H1 (cell line): ENCODE measurements at regions of chr5 and their contacts with region 1.

Region 1: DNA sequence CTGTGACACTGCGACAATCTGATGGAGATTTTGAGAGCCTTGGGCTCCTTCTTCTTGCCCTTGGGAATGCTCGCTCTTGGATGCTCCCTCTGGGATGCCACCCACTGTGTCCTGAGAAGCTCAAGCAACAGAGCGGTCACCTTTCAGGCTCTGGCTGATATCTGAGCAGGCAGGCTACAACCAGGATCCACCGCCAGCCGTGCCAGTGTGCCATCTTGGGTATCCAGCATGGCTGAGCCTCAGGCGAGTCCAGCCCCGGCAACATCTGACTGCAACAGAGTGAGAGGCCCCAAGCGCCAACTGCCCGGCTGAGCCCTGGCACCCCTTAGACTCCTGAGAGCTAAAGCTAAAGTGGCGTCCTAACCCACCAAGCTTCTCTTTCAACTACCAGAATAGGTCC is 202.1 kb downstream of the IRX2 start:
- DNase-seq: no peak
- H3K4me3 ChIP-seq: no peak overlapping the region
- H3K27ac ChIP-seq: no peak overlapping the region
- H3K4me1 ChIP-seq: no peaks in the 10 kb centered on the region
- H3K27me3 ChIP-seq: no peaks in the 10 kb centered on the region
- CTCF ChIP-seq: no peak
- EP300 ChIP-seq: no peak
- POLR2A ChIP-seq: no peak
- RAD21 ChIP-seq: no peak

Region 2: GRCh38 chr5:2303431-2304100 is 245.8 kb before region 1 on chr5:
- CTCF ChIA-PET with region 1: no interaction called
- POLR2A ChIA-PET with region 1: no interaction called
- DNase-seq: no peak
- H3K4me3 ChIP-seq: no peak overlapping the region
- H3K27ac ChIP-seq: no peak overlapping the region
- H3K4me1 ChIP-seq: peaks cover 0 to 7% (median under 1%) of the 10 kb centered on the region in 4 experiments; a peak in 3 of 7 replicates
- H3K27me3 ChIP-seq: no peaks in the 10 kb centered on the region
- CTCF ChIP-seq: no peak
- EP300 ChIP-seq: no peak
- POLR2A ChIP-seq: no peak
- RAD21 ChIP-seq: no peak

Region 3: GRCh38 chr5:2563046-2563445 is 13.7 kb after region 1 on chr5:
- CTCF ChIA-PET with region 1: interaction called, 12 read pairs
- POLR2A ChIA-PET with region 1: no interaction called
- DNase-seq: no peak
- H3K4me3 ChIP-seq: no peak overlapping the region
- H3K27ac ChIP-seq: no peak overlapping the region
- H3K4me1 ChIP-seq: no peaks in the 10 kb centered on the region
- H3K27me3 ChIP-seq: no peaks in the 10 kb centered on the region
- CTCF ChIP-seq: peak; percentile 30 to 54 (median 35); a peak in 3 of 4 replicates
- EP300 ChIP-seq: no peak
- POLR2A ChIP-seq: no peak
- RAD21 ChIP-seq: peak; percentile 28 to 49; a peak in 3 of 4 replicates